H1 (cell line): ENCODE measurements at regions of chr19 and their contacts with region 1.

Region 1: GRCh38 chr19:40798223-40798996 is 581 bp upstream of the EGLN2 start:
- DNase-seq: peak; percentile 99 to 100
- H3K4me3 ChIP-seq: peak overlapping the region; percentile 52 to 70 (median 64)
- H3K27ac ChIP-seq: peak overlapping the region; percentile 79
- H3K4me1 ChIP-seq: peaks cover 0 to 32% (median 19%) of the 10 kb centered on the region in 4 experiments; a peak in 6 of 7 replicates
- H3K27me3 ChIP-seq: no peaks in the 10 kb centered on the region
- CTCF ChIP-seq: peak; percentile 51 to 84 (median 59); a peak in 3 of 4 replicates
- EP300 ChIP-seq: no peak
- POLR2A ChIP-seq: peak; percentile 51 to 92
- RAD21 ChIP-seq: peak; percentile 45 to 52

Region 2: DNA sequence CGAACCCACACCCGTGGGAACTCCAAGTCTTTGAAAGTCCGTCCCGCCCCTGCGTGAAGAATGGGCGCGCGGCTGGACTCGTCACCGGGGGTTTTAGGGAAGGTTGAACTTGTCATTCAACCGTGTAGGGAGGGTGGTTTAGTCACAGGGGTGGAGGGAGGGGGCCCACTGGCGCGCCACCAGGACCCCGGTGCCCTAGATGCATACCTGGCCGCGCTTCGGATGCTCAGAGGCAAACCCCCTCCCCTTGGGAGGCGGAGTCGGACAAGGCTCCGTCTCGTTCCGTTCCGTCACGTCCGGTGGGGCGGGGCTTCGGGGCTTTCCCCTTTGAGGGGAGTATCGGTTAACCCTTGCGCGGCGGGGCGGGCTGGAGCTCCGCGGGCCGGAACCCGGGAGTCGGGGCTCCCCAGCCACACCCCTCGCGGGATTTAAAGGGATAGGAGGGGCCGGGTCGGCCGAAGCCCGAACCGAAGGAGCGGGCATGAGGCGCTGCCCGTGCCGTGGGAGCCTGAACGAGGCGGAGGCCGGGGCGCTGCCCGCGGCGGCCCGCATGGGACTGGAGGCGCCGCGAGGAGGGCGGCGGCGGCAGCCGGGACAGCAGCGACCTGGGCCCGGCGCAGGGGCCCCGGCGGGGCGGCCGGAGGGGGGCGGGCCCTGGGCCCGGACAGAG is 81.6 kb before region 1 on chr19 and contains the starts of genes COQ8B and ITPKC:
- CTCF ChIA-PET with region 1: no interaction called
- POLR2A ChIA-PET with region 1: interaction called, 10 read pairs
- DNase-seq: peak; percentile 90 to 100
- H3K4me3 ChIP-seq: peak within 1 kb of the TSS; percentile 72 to 94 (median 90)
- H3K27ac ChIP-seq: peak within 1 kb of the TSS; percentile 74
- H3K4me1 ChIP-seq: peaks cover 0 to 25% (median 8%) of the 10 kb centered on the region in 4 experiments; a peak in 6 of 7 replicates
- H3K27me3 ChIP-seq: no peaks in the 10 kb centered on the region
- CTCF ChIP-seq: peak in 1 of 3 experiments; percentile 3; a peak in 1 of 4 replicates
- EP300 ChIP-seq: peak; percentile 71 to 99
- POLR2A ChIP-seq: peak in 1 of 2 experiments; percentile 70; a peak in 1 of 3 replicates
- RAD21 ChIP-seq: no peak
- total RNA-seq, gene COQ8B: 39.3 and 41.7 TPM in 2 replicates
- total RNA-seq, gene ITPKC: 8.9 and 9.5 TPM in 2 replicates

Region 3: GRCh38 chr19:40777937-40778705 is 20.3 kb before region 1 on chr19 and contains the start of gene RAB4B:
- CTCF ChIA-PET with region 1: interaction called, 29 read pairs
- POLR2A ChIA-PET with region 1: interaction called, 218 read pairs
- DNase-seq: peak; percentile 100
- H3K4me3 ChIP-seq: peak within 1 kb of the TSS; percentile 79 to 90 (median 86)
- H3K27ac ChIP-seq: peak within 1 kb of the TSS; percentile 99
- H3K4me1 ChIP-seq: peaks cover 0 to 14% (median 6%) of the 10 kb centered on the region in 4 experiments; a peak in 6 of 7 replicates
- H3K27me3 ChIP-seq: no peaks in the 10 kb centered on the region
- CTCF ChIP-seq: no peak
- EP300 ChIP-seq: no peak
- POLR2A ChIP-seq: no peak
- RAD21 ChIP-seq: no peak
- total RNA-seq, gene RAB4B: 15.8 and 15.9 TPM in 2 replicates

Region 4: DNA sequence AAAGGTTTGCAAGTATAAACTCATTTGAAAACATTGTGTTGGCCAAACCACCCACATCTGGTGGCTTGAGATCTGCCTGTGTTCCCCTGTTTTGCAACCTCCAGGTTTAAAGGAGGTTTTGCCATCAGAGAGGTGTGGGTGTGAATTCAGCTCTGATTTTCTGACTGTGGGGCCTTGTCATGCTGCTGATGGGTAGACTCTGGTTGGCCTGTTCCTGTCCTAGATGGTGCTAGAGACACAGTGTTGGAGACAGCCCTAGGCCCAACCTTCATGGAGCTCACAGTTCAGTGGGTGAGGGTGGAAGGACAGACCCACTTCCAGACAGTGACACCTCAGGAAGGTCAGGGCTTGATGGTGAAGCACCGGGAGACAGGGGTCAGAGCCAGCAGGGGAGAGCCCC is 12.9 kb before region 1 on chr19:
- CTCF ChIA-PET with region 1: interaction called, 7 read pairs
- POLR2A ChIA-PET with region 1: interaction called, 218 read pairs
- DNase-seq: no peak
- H3K4me3 ChIP-seq: no peak overlapping the region
- H3K27ac ChIP-seq: 0 out of 2 replicates have a peak overlapping the region, but pooled peaks have one; percentile 45
- H3K4me1 ChIP-seq: no peaks in the 10 kb centered on the region
- H3K27me3 ChIP-seq: no peaks in the 10 kb centered on the region
- CTCF ChIP-seq: no peak
- EP300 ChIP-seq: no peak
- POLR2A ChIP-seq: no peak
- RAD21 ChIP-seq: no peak

Region 5: GRCh38 chr19:40974633-40975037 is 176.2 kb after region 1 on chr19:
- CTCF ChIA-PET with region 1: no interaction called
- POLR2A ChIA-PET with region 1: no interaction called
- DNase-seq: peak; percentile 53 to 84
- H3K4me3 ChIP-seq: no peak overlapping the region
- H3K27ac ChIP-seq: no peak overlapping the region
- H3K4me1 ChIP-seq: no peaks in the 10 kb centered on the region
- H3K27me3 ChIP-seq: no peaks in the 10 kb centered on the region; a peak in 1 of 7 replicates
- CTCF ChIP-seq: peak; percentile 78 to 92 (median 84)
- EP300 ChIP-seq: no peak
- POLR2A ChIP-seq: no peak
- RAD21 ChIP-seq: peak; percentile 85 to 92